ENCODE measurements at regions of chr9 and their contacts with region 1.

Region 1: DNA sequence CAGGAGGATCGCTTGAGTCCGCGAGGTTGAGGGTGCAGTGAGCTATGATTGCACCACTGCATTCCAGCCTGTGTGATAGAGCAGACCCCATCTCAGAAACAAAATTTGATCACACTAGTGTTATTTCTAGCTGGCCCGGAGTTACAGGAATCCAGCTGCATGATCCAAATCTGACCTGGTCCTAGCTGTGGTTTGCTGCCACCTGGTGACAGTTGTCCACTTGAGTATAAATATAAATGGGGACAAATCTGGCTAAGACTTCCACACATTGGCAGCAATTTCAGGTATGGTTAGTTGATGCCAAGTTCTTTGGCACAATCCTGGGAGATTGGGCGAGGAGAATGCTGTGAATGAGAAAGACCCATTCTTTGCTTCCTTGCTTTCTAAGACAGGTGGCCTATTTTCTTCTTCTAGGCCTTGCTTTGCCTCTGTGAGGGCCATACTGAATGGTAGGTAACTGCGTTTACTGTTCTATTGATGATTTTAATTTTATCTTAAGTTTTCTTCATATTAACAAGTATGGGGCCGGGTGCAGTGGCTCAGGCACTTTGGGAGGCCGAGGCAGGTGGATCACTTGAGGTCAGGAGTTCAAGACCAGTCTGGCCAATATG is 35.4 kb downstream of the UBE2R2 start:
- DNase-seq: peak; percentile 65 to 73 (median 69)
- H3K4me3 ChIP-seq: no peak overlapping the region
- H3K4me3 Mint-ChIP-seq: no peak overlapping the region
- H3K27ac ChIP-seq: peak overlapping the region in 1 of 2 donors; percentile 43
- H3K27ac Mint-ChIP-seq: peak overlapping the region in 3 of 7 donors; percentile 41 to 80 (median 50)
- H3K4me1 ChIP-seq: peaks cover 19 to 31% of the 10 kb centered on the region in 2 donors
- H3K4me1 Mint-ChIP-seq: peaks cover 36% of the 10 kb centered on the region
- H3K27me3 ChIP-seq: no peaks in the 10 kb centered on the region
- H3K27me3 Mint-ChIP-seq: no peaks in the 10 kb centered on the region
- CTCF ChIP-seq: peak; percentile 70

Region 2: GRCh38 chr9:33737811-33738606 is 114.3 kb before region 1 on chr9:
- intact Hi-C with region 1: loop called (anchors 5 to 10 kb)
- DNase-seq: peak; percentile 23 to 48 (median 43)
- H3K4me3 ChIP-seq: no peak overlapping the region
- H3K4me3 Mint-ChIP-seq: no peak overlapping the region
- H3K27ac ChIP-seq: no peak overlapping the region
- H3K27ac Mint-ChIP-seq: no peak overlapping the region
- H3K4me1 ChIP-seq: no peaks in the 10 kb centered on the region
- H3K4me1 Mint-ChIP-seq: peaks cover 3% of the 10 kb centered on the region
- H3K27me3 ChIP-seq: no peaks in the 10 kb centered on the region
- H3K27me3 Mint-ChIP-seq: peaks cover 6 to 18% (median 7%) of the 10 kb centered on the region in 3 donors
- CTCF ChIP-seq: peak; percentile 80

Region 3: GRCh38 chr9:33778700-33779351 is 73.5 kb before region 1 on chr9:
- intact Hi-C with region 1: no loop called
- DNase-seq: peak; percentile 42 to 72 (median 61)
- H3K4me3 ChIP-seq: no peak overlapping the region
- H3K4me3 Mint-ChIP-seq: no peak overlapping the region
- H3K27ac ChIP-seq: no peak overlapping the region
- H3K27ac Mint-ChIP-seq: no peak overlapping the region
- H3K4me1 ChIP-seq: no peaks in the 10 kb centered on the region
- H3K4me1 Mint-ChIP-seq: peaks cover 11% of the 10 kb centered on the region
- H3K27me3 ChIP-seq: no peaks in the 10 kb centered on the region
- H3K27me3 Mint-ChIP-seq: peaks cover 6 to 11% (median 9%) of the 10 kb centered on the region in 3 donors
- CTCF ChIP-seq: peak; percentile 91

Region 4: GRCh38 chr9:33816327-33817252 is 35.7 kb before region 1 on chr9 and contains the start of gene UBE2R2:
- intact Hi-C with region 1: loop called (anchors 2 to 5 kb)
- DNase-seq: peak; percentile 98 to 99 (median 99)
- H3K4me3 ChIP-seq: peak within 1 kb of the TSS; percentile 71 to 91 (median 89)
- H3K4me3 Mint-ChIP-seq: peak within 1 kb of the TSS; percentile 90 to 98
- H3K27ac ChIP-seq: peak within 1 kb of the TSS; percentile 99
- H3K27ac Mint-ChIP-seq: peak within 1 kb of the TSS; percentile 97 to 99 (median 98)
- H3K4me1 ChIP-seq: peaks cover 46 to 64% of the 10 kb centered on the region in 2 donors
- H3K4me1 Mint-ChIP-seq: peaks cover 52% of the 10 kb centered on the region
- H3K27me3 ChIP-seq: no peaks in the 10 kb centered on the region
- H3K27me3 Mint-ChIP-seq: no peaks in the 10 kb centered on the region
- CTCF ChIP-seq: no peak
- polyA plus RNA-seq, gene UBE2R2: 30.5 to 50.1 (median 37.2) TPM

Measured in CD14-positive monocyte (primary cell).